Right cardiac atrium (tissue), 5 donors: ENCODE measurements at regions of chr11 and their contacts with region 1.

Region 1: GRCh38 chr11:8911029-8911826 is at the start of gene AKIP1:
- DNase-seq: peak; percentile 98 to 99 (median 99)
- ATAC-seq: peak; percentile 98
- H3K4me3 ChIP-seq: peak within 1 kb of the TSS; percentile 66
- H3K27ac ChIP-seq: peak within 1 kb of the TSS; percentile 92
- H3K4me1 ChIP-seq: no peaks in the 10 kb centered on the region
- H3K27me3 ChIP-seq: no peaks in the 10 kb centered on the region
- total RNA-seq, gene AKIP1: 24.4 to 30.3 (median 25.4) TPM

Region 2: DNA sequence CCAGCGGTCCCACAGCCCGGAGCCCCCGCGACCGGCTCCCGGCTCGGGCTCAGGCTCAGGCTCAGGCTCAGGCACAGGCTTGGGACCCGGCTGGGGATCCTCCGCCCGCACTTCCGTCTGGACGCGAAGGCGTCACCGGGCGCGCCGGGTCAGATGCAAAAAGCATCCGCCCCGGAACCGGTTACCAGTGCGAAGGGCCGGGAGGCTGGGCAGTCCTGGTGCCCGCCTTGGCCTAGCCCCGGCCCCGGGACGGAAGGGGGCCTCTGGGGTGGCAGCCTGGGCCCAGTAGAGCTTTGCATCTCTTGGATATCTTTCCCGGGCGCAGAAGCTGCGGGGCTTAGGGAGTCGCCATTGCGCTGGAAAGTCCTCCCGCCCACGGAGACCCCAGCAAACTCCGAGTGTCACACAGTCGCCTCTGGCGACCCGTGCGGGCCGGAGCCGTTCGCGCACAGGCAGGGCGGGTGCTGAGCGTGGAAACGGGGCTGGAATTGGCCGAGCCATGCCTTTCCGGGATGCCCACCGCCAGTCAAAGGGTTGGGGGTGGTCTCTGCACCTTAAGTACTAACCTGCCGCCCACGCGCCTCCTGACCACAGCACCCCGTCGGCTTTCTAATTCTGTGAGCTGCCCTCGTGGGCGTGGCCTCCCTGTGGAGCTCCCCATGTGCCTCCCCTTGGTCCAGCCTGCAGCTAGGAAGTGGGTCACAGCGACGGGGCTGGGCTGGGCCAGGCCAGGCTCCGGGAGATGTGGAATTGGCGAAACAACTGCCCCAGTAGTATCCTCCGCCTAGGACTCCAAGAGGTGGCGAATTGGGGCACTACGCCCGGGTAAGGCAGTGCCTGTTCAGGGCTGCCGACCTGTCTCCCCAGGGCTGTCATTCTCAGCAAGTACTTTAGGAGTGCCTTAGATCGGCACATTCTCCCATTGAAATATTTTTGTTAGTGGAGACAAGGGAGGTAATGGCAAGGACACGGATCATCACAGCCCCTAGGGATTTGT is 53.4 kb after region 1 on chr11 and contains the start of gene TMEM9B:
- intact Hi-C with region 1: loop called in 1 of 4 experiments (anchors 5 kb)
- DNase-seq: peak; percentile 94 to 97 (median 96)
- ATAC-seq: peak; percentile 96 to 97
- H3K4me3 ChIP-seq: peak within 1 kb of the TSS; percentile 52
- H3K27ac ChIP-seq: peak within 1 kb of the TSS; percentile 86
- H3K4me1 ChIP-seq: peaks cover 4% of the 10 kb centered on the region
- H3K27me3 ChIP-seq: no peaks in the 10 kb centered on the region
- total RNA-seq, gene TMEM9B: 37.2 to 44.7 (median 40.4) TPM

Region 3: GRCh38 chr11:9137293-9138132 is 226.3 kb after region 1 on chr11:
- intact Hi-C with region 1: loop called in 1 of 4 experiments (anchors 10 kb)
- DNase-seq: peak; percentile 65 to 90 (median 89)
- ATAC-seq: peak; percentile 88 to 91
- H3K4me3 ChIP-seq: no peak overlapping the region
- H3K27ac ChIP-seq: no peak overlapping the region
- H3K4me1 ChIP-seq: no peaks in the 10 kb centered on the region
- H3K27me3 ChIP-seq: no peaks in the 10 kb centered on the region

Region 4: DNA sequence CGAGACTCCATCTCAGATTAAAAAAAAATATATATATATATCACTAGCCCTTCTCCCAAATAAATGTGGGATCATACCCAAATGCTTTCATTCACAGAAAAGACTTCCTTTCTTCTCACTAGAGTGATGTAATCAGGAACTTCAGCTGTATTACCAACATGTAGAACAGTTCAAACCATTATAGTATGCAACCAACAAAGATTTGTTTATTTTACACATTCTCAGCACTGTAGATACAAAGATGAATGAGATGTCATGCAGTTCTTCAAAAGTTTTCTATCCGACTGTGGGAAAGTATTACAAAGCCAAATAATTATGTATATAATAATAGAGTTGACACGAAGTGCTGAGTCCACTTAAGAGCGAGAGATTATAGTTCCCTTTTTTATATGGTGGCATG is 527.4 kb after region 1 on chr11:
- intact Hi-C with region 1: no loop called
- DNase-seq: no peak
- ATAC-seq: no peak
- H3K4me3 ChIP-seq: no peak overlapping the region
- H3K27ac ChIP-seq: no peak overlapping the region
- H3K4me1 ChIP-seq: no peaks in the 10 kb centered on the region
- H3K27me3 ChIP-seq: no peaks in the 10 kb centered on the region